Activated CD4-positive, alpha-beta memory T cell treated with anti-CD3 and anti-CD28 coated beads for 36 hours (primary cell): ENCODE measurements at regions of chr12 and their contacts with region 1.

Region 1: GRCh38 chr12:15563663-15564062 is 225.5 kb downstream of the EPS8 start:
- DNase-seq: peak; percentile 40
- H3K4me3 Mint-ChIP-seq: peak overlapping the region; percentile 69
- H3K27ac Mint-ChIP-seq: peak overlapping the region; percentile 90
- H3K4me1 Mint-ChIP-seq: peaks cover 58% of the 10 kb centered on the region
- H3K27me3 Mint-ChIP-seq: no peaks in the 10 kb centered on the region

Region 2: DNA sequence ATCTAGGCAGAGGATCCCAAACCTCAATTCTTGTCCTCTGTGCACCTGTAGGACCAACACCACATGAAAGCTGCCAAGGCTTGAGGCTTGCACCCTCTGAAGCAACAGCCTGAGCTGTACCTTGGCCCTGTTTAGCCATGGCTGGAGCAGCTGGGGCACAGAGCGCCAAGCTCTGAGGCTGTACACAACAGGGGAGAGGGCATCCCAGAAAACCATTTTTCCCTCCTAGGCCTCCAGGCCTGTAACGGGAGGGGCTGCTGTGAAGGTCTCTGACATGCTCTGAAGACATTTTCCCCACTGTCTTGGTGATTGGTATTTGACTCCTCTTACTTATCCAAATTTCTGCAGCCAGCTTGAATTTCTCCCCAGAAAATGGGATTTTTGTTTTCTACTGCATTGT is 263.7 kb before region 1 on chr12:
- CTCF ChIA-PET with region 1: no interaction called
- POLR2A ChIA-PET with region 1: no interaction called
- intact Hi-C with region 1: no loop called
- DNase-seq: no peak
- H3K4me3 Mint-ChIP-seq: no peak overlapping the region
- H3K27ac Mint-ChIP-seq: no peak overlapping the region
- H3K4me1 Mint-ChIP-seq: no peaks in the 10 kb centered on the region
- H3K27me3 Mint-ChIP-seq: no peaks in the 10 kb centered on the region

Region 3: DNA sequence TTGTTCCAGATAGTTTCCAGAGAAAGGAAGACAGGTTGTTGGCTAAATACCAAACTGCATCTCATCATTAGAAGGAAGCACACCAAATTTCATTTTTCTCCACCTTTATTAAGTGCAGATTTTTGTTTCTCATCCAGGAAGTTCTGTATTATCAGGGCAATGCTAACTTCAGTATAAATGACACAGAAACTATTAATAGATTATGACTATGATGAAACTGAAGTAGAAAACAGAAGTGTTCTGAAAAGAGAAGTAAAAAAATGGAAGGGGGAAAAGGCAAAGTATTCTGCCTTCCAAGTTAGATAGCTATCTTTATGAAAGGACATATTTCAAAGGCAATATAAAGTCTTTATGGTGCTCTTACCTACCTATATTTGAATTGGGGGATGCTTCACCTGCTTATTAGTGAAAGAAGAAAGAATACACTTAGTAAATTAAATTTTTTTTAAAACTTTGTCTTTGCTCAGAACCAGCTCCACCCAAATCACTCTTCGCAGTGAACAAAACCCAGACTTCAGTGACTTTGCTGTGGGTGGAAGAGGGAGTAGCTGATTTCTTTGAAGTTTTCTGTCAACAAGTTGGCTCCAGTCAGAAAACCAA is 17.5 kb before region 1 on chr12:
- CTCF ChIA-PET with region 1: no interaction called
- POLR2A ChIA-PET with region 1: interaction called, 3 read pairs
- intact Hi-C with region 1: loop called (anchors 1 kb)
- DNase-seq: peak; percentile 31
- H3K4me3 Mint-ChIP-seq: no peak overlapping the region
- H3K27ac Mint-ChIP-seq: peak overlapping the region; percentile 78
- H3K4me1 Mint-ChIP-seq: peaks cover 53% of the 10 kb centered on the region
- H3K27me3 Mint-ChIP-seq: no peaks in the 10 kb centered on the region

Region 4: DNA sequence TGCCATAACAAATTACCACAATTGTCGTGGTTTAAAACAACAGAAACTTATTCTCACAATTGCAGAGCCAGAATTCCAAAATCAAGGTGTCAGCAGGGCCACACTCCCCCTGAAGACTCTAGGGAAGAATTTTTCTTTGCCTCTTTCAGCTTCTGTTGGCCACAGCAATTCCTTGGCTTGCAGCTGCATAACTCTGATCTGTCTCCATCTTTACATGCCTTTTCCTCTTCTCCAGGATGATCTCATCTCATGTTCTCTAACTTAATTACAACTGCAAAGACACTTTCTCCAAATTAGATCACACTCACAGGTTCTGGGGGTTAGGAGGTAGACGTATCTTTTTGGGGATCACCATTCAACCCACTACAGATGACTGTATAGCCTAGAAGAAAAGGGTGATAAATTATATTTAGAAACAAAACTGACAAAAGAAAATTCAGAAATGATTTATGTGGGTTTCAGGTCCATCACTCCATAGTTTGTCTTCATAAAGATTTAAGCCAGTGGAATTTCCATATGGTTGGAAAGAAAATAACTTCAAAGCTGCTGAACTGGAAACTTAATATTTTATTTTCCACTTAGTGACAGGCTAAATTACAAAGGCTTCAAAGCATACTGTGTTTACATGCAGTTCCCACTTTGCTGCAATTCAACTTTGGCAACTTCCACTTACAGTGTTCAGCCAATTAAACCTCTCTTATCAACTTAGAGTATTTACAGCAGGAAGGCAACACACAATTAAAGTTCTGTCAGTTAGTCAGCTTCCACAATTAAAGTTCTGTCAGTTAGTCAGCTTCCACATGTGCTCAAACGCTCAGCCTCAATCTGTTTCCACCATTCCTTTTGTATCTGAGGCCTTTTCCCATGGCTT is 12.2 kb after region 1 on chr12:
- CTCF ChIA-PET with region 1: interaction called, 5 read pairs
- POLR2A ChIA-PET with region 1: interaction called, 4 read pairs
- intact Hi-C with region 1: loop called (anchors 1 kb)
- DNase-seq: no peak
- H3K4me3 Mint-ChIP-seq: no peak overlapping the region
- H3K27ac Mint-ChIP-seq: peak overlapping the region; percentile 7
- H3K4me1 Mint-ChIP-seq: peaks cover 39% of the 10 kb centered on the region
- H3K27me3 Mint-ChIP-seq: no peaks in the 10 kb centered on the region